Prostate gland (tissue), 2 donors: ENCODE measurements at regions of chr6 and their contacts with region 1.

Region 1: GRCh38 chr6:138115877-138116660 is 8.8 kb upstream of the PERP start:
- DNase-seq: peak; percentile 57
- H3K4me3 ChIP-seq: no peak overlapping the region
- H3K27ac ChIP-seq: no peak overlapping the region
- H3K4me1 ChIP-seq: no peaks in the 10 kb centered on the region
- H3K27me3 ChIP-seq: no peaks in the 10 kb centered on the region
- CTCF ChIP-seq: peak; percentile 62 to 89 (median 81)
- POLR2A ChIP-seq: no peak

Region 2: DNA sequence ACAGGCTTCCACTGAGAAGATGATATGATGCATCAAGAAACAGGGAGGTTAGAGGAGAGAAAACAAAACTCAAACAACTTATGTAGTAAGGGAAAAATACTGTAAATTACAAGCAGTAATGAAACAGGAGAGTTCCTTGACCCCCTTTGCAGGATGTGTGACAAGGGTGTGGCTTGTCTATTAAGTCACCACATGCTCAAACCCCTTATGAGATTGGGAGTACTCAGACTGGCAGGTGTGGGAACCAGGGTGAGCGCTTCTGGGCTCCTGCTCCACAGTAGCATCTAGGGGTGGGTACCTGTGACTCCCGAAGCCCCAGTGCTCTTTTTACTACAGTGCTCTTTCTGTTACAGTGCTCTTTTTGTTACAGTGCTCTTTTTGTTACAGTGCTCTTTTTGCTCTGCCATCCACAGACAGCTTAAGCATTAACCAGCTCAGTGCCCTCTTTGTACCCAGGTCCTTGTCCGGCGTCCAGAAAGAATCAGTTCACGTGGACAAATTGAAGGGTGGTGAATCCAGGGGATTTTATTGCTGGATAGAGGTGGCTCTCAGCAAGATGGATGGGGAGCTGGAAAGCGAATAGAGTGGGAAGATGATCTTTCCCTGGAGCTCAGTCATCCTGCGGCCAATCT is 650.6 kb before region 1 on chr6:
- intact Hi-C with region 1: no loop called
- DNase-seq: no peak
- H3K4me3 ChIP-seq: no peak overlapping the region
- H3K27ac ChIP-seq: no peak overlapping the region
- H3K4me1 ChIP-seq: no peaks in the 10 kb centered on the region
- H3K27me3 ChIP-seq: no peaks in the 10 kb centered on the region
- CTCF ChIP-seq: no peak
- POLR2A ChIP-seq: no peak

Region 3: GRCh38 chr6:138287144-138287955 is 171.3 kb after region 1 on chr6:
- intact Hi-C with region 1: loop called (anchors 5 kb)
- DNase-seq: peak; percentile 75
- H3K4me3 ChIP-seq: no peak overlapping the region
- H3K27ac ChIP-seq: peak overlapping the region; percentile 15 to 16
- H3K4me1 ChIP-seq: no peaks in the 10 kb centered on the region
- H3K27me3 ChIP-seq: no peaks in the 10 kb centered on the region
- CTCF ChIP-seq: peak; percentile 41 to 77 (median 74)
- POLR2A ChIP-seq: no peak

Region 4: DNA sequence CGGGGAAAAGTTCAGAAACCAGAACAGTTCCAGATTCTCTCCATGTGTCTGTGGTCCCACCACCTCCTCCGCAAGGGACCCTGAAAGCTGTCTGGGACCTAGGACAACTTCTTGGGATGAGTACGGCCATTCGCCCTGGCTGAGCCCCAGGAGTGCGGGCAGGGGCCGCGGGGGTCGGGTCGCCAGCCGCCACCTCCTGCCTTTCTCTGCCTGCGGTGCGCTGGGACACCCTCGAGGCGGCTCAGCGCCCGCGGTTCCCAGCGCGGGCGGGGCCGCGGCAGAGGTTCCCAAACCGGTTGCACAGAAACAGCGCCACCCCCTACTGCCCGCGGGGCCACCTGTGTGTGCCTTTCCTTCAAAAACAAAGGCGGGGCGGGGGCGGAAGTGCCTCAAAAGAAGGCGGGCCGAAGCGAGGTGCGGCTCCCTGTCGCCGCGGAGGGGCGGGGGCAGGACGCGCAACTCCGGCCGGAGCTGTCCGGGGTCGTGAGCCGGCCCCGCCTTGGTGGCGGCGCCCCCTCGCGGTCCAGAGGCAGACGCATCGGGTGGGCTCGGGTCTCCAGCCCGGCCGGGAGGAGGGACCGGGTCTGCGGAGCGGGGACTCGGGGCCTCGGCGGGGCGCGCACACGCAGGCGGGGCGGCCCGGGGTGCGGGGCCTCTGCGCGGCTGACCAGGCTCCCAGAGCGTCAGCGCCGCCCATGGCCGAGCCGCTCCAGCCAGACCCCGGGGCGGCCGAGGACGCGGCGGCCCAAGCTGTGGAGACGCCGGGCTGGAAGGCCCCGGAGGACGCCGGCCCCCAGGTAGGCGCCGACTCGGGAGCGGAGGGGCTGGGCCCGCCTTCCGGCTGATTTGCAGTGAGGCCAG is 288.0 kb after region 1 on chr6 and contains the start of gene HEBP2:
- intact Hi-C with region 1: loop called (anchors 10 kb)
- DNase-seq: peak; percentile 98
- H3K4me3 ChIP-seq: peak within 1 kb of the TSS; percentile 75 to 94
- H3K27ac ChIP-seq: peak within 1 kb of the TSS; percentile 96 to 99
- H3K4me1 ChIP-seq: peaks cover 2% of the 10 kb centered on the region
- H3K27me3 ChIP-seq: no peaks in the 10 kb centered on the region
- CTCF ChIP-seq: peak; percentile 52 to 88 (median 84)
- POLR2A ChIP-seq: peak; percentile 89
- total RNA-seq, gene HEBP2: 95.4 to 187 TPM

Region 5: GRCh38 chr6:138509371-138509770 is 393.3 kb after region 1 on chr6:
- intact Hi-C with region 1: loop called (anchors 10 kb)
- DNase-seq: peak; percentile 68
- H3K4me3 ChIP-seq: no peak overlapping the region
- H3K27ac ChIP-seq: no peak overlapping the region
- H3K4me1 ChIP-seq: no peaks in the 10 kb centered on the region
- H3K27me3 ChIP-seq: no peaks in the 10 kb centered on the region
- CTCF ChIP-seq: peak; percentile 27 to 77 (median 70)
- POLR2A ChIP-seq: no peak

Region 6: GRCh38 chr6:138588805-138589434 is 472.9 kb after region 1 on chr6:
- intact Hi-C with region 1: loop called (anchors 5 kb)
- DNase-seq: peak; percentile 52
- H3K4me3 ChIP-seq: no peak overlapping the region
- H3K27ac ChIP-seq: no peak overlapping the region
- H3K4me1 ChIP-seq: no peaks in the 10 kb centered on the region
- H3K27me3 ChIP-seq: no peaks in the 10 kb centered on the region
- CTCF ChIP-seq: peak; percentile 78 to 90 (median 86)
- POLR2A ChIP-seq: no peak

Region 7: DNA sequence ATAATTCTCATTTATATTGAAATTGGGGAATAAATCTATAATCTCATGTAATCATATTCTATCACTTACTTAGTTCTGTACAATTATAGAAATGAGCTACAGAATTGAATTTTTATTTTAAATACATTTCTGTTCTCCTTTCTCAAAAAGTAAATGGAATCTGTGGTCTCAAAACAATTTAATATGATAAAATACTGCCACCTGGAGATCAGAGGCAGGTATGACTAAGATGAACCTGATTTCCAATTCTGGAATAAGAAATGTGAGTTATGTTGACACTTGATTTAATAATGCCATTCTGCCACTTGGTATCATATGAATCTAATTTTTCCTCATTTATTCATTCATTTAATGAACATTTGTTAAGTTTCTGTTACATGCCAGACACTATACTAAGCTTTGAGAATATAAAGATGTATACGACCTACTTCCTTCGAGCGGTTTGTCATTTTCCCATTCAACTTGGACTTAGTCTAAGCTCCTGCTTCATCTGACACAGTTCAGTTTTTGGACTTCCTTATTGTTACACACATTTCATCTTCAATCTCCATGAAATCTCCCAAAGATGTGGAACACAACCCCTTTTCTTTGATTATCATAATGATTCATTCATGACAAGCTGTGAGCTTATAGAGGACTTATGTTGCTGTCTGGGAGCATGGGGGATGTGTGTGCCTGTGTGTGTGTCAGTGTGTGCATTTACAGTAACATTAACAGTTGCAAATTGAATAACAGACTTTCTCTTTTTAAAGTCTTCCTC is 650.0 kb after region 1 on chr6:
- intact Hi-C with region 1: loop called (anchors 10 kb)
- DNase-seq: no peak
- H3K4me3 ChIP-seq: no peak overlapping the region
- H3K27ac ChIP-seq: no peak overlapping the region
- H3K4me1 ChIP-seq: no peaks in the 10 kb centered on the region
- H3K27me3 ChIP-seq: no peaks in the 10 kb centered on the region
- CTCF ChIP-seq: peak in 3 of 4 experiments; percentile 53 to 87 (median 86)
- POLR2A ChIP-seq: no peak